Dendritic cell treated with granulocyte-macrophage colony-stimulating factor and Interleukin-4, amounts not matched to agents 40 ng/mL and 50 ng/mL, for 4 days (primary cell): ENCODE measurements at regions of chr4 and their contacts with region 1.

Region 1: GRCh38 chr4:87220094-87220822 is at the start of gene KLHL8:
- H3K4me3 Mint-ChIP-seq: peak within 1 kb of the TSS; percentile 95
- H3K27ac Mint-ChIP-seq: peak within 1 kb of the TSS; percentile 97
- H3K4me1 Mint-ChIP-seq: peaks cover 16% of the 10 kb centered on the region
- H3K27me3 Mint-ChIP-seq: no peaks in the 10 kb centered on the region

Region 2: DNA sequence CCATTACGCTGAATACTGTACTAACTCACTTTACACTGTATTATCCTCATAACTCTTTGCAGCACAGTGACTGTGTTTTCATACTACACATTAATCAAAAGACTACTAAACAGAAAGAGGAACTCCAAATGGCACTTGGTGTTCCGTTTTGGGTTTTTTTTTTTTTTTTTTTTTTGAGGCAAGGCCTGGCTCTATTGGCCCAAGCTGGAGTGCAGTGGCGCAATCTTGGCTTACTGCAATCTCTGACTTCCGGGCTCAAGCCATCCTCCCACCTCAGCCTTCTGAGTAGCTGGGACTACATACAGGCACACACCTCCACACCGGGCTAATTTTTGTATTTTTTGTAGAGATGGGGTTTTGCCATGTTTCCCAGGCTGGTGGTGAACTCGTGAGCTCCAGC is 10.6 kb before region 1 on chr4:
- intact Hi-C with region 1: loop called (anchors 1 kb)
- H3K4me3 Mint-ChIP-seq: peak overlapping the region; percentile 66
- H3K27ac Mint-ChIP-seq: peak overlapping the region; percentile 91
- H3K4me1 Mint-ChIP-seq: peaks cover 34% of the 10 kb centered on the region
- H3K27me3 Mint-ChIP-seq: no peaks in the 10 kb centered on the region

Region 3: GRCh38 chr4:87235020-87235671 is 14.9 kb after region 1 on chr4:
- intact Hi-C with region 1: loop called (anchors 2 kb)
- H3K4me3 Mint-ChIP-seq: peak overlapping the region; percentile 77
- H3K27ac Mint-ChIP-seq: peak overlapping the region; percentile 84
- H3K4me1 Mint-ChIP-seq: peaks cover 2% of the 10 kb centered on the region
- H3K27me3 Mint-ChIP-seq: peaks cover 2% of the 10 kb centered on the region

Region 4: GRCh38 chr4:87390891-87391575 is 170.8 kb after region 1 on chr4 and contains the start of gene HSD17B11:
- intact Hi-C with region 1: loop called (anchors 10 kb)
- H3K4me3 Mint-ChIP-seq: peak within 1 kb of the TSS; percentile 90
- H3K27ac Mint-ChIP-seq: peak within 1 kb of the TSS; percentile 93
- H3K4me1 Mint-ChIP-seq: peaks cover 36% of the 10 kb centered on the region
- H3K27me3 Mint-ChIP-seq: no peaks in the 10 kb centered on the region

Region 5: GRCh38 chr4:87633243-87633642 is 413.0 kb after region 1 on chr4:
- intact Hi-C with region 1: no loop called
- H3K4me3 Mint-ChIP-seq: no peak overlapping the region
- H3K27ac Mint-ChIP-seq: no peak overlapping the region
- H3K4me1 Mint-ChIP-seq: no peaks in the 10 kb centered on the region
- H3K27me3 Mint-ChIP-seq: no peaks in the 10 kb centered on the region